Naive thymus-derived CD4-positive, alpha-beta T cell (primary cell): ENCODE measurements at regions of chr12 and their contacts with region 1.

Region 1: GRCh38 chr12:132724506-132725241 is 14.0 kb downstream of the PGAM5 start:
- DNase-seq: no peak
- ATAC-seq: no peak
- H3K4me3 ChIP-seq: no peak overlapping the region
- H3K4me3 Mint-ChIP-seq: no peak overlapping the region
- H3K27ac ChIP-seq: no peak overlapping the region
- H3K27ac Mint-ChIP-seq: no peak overlapping the region
- H3K4me1 ChIP-seq: no peaks in the 10 kb centered on the region
- H3K4me1 Mint-ChIP-seq: peaks cover 0 to 2% (median 2%) of the 10 kb centered on the region in 7 donors
- H3K27me3 ChIP-seq: no peaks in the 10 kb centered on the region
- H3K27me3 Mint-ChIP-seq: no peaks in the 10 kb centered on the region

Region 2: GRCh38 chr12:132460571-132460970 is 264.1 kb before region 1 on chr12:
- CTCF ChIA-PET with region 1: no interaction called
- POLR2A ChIA-PET with region 1: no interaction called
- intact Hi-C with region 1: no loop called
- DNase-seq: no peak
- ATAC-seq: no peak
- H3K4me3 ChIP-seq: no peak overlapping the region
- H3K4me3 Mint-ChIP-seq: no peak overlapping the region
- H3K27ac ChIP-seq: no peak overlapping the region
- H3K27ac Mint-ChIP-seq: no peak overlapping the region
- H3K4me1 ChIP-seq: no peaks in the 10 kb centered on the region
- H3K4me1 Mint-ChIP-seq: peaks cover 0 to 21% (median 7%) of the 10 kb centered on the region in 7 donors
- H3K27me3 ChIP-seq: no peaks in the 10 kb centered on the region
- H3K27me3 Mint-ChIP-seq: no peaks in the 10 kb centered on the region

Region 3: DNA sequence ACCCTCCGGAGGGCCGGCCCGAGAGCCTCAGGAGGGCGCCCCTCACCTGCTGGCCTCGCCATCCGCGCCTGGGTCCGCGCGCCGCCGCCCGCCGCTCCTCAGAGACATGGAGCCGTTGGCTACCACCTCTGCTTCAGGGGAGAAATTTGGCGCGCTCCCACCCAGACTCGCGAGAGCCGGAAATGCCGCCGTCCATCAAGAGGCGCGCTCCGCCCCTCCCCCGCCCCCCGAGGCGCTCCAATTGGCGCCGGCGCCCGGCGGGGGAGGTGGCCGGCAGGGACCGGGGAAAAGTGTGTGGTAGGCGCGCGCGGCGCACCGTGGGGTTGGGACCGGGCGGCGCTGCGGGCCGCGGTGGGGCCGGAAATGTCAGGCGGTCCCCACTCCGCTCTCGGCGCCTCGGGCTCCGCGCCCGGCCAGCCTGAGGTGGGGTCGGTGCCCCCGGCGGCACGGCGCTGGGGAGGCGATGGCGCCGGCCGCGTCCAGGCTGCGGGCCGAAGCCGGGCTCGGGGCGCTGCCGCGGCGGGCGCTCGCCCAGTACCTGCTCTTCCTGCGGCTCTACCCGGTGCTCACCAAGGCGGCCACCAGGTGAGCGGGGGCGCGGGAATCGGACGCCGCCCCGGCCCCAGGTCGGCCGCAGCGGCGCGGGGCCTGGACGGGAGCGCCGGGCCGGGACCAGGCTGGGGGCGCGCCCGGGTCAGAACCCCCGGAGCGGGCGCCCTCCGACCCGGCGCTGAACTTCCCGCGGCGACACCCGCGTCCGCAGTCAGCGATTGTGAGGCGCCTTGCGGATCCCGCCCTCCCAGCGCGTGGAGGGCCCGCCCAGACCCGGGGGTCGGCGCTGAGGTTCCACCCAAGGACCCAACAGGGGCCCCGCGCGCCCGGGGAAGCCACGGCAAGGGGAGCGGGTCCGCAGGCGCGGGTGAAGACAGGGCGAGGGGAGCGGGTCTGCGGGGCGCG is 37.2 kb before region 1 on chr12 and contains the starts of genes POLE and PXMP2:
- CTCF ChIA-PET with region 1: no interaction called
- POLR2A ChIA-PET with region 1: no interaction called
- intact Hi-C with region 1: loop called in 1 of 2 experiments (anchors 5 kb)
- DNase-seq: peak; percentile 85 to 94 (median 89)
- ATAC-seq: peak; percentile 98
- H3K4me3 ChIP-seq: peak within 1 kb of the TSS; percentile 47
- H3K4me3 Mint-ChIP-seq: peak within 1 kb of the TSS; percentile 65 to 89 (median 84)
- H3K27ac ChIP-seq: peak within 1 kb of the TSS; percentile 58
- H3K27ac Mint-ChIP-seq: peak within 1 kb of the TSS in 3 of 9 donors; percentile 45 to 92 (median 87)
- H3K4me1 ChIP-seq: peaks cover 4 to 14% of the 10 kb centered on the region in 2 donors
- H3K4me1 Mint-ChIP-seq: peaks cover 0 to 31% (median 22%) of the 10 kb centered on the region in 7 donors
- H3K27me3 ChIP-seq: no peaks in the 10 kb centered on the region
- H3K27me3 Mint-ChIP-seq: no peaks in the 10 kb centered on the region
- total RNA-seq, gene POLE: 54.5 to 138 (median 62.1) TPM
- total RNA-seq, gene PXMP2: 2.6 to 26.8 (median 5.4) TPM

Region 4: GRCh38 chr12:132966676-132967415 is 242.2 kb after region 1 on chr12:
- CTCF ChIA-PET with region 1: no interaction called
- POLR2A ChIA-PET with region 1: no interaction called
- intact Hi-C with region 1: no loop called
- DNase-seq: no peak
- ATAC-seq: no peak
- H3K4me3 ChIP-seq: no peak overlapping the region
- H3K4me3 Mint-ChIP-seq: no peak overlapping the region
- H3K27ac ChIP-seq: no peak overlapping the region
- H3K27ac Mint-ChIP-seq: no peak overlapping the region
- H3K4me1 ChIP-seq: no peaks in the 10 kb centered on the region
- H3K4me1 Mint-ChIP-seq: peaks cover 0 to 6% (median 0%) of the 10 kb centered on the region in 7 donors
- H3K27me3 ChIP-seq: no peaks in the 10 kb centered on the region
- H3K27me3 Mint-ChIP-seq: no peaks in the 10 kb centered on the region